H1 (cell line): ENCODE measurements at regions of chr2 and their contacts with region 1.

Region 1: DNA sequence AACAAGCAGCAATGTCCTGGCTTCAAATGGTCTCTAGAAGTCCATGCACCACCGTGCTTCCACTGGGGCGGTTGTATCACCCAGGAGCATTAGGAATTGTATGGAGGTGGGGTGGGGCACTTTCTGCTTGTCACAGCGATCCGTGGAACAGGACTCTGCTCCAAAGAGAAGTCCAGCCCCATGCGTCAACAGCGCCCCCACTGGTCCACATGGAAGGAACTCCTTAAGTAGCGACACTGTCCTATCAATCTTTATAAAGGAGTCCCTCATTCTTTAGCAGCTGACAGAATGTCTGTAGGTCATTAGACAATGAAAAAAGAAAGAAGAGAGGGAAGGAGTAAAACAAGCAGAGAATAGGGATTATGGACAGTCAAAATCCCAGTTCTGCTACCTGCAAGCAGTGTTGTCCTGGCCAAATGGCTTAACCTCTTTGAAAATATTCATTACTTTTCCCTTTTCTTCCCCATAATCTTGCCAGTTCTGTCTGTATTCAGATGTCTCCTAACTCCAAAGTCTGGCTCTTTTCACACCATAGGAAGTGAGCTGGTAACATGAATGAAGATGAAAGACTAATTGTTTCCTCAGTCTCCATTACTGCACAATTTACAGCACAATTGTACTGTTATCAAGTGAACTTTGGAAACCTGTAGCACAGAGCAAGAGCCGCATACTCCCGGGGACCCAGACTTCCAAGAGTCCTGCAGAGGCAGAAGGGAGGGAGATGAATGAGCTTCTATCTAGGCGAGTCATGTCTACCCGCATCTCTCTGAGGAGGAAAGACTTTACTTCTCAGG is 9.9 kb downstream of the NFE2L2 start:
- DNase-seq: peak; percentile 39 to 86
- H3K4me3 ChIP-seq: no peak overlapping the region
- H3K27ac ChIP-seq: no peak overlapping the region
- H3K4me1 ChIP-seq: peaks cover 0 to 7% (median 0%) of the 10 kb centered on the region in 4 experiments; a peak in 1 of 7 replicates
- H3K27me3 ChIP-seq: no peaks in the 10 kb centered on the region
- CTCF ChIP-seq: peak; percentile 66 to 92 (median 89)
- EP300 ChIP-seq: no peak
- POLR2A ChIP-seq: no peak
- RAD21 ChIP-seq: peak; percentile 52 to 73

Region 2: GRCh38 chr2:177229448-177230242 is 25.0 kb before region 1 on chr2:
- CTCF ChIA-PET with region 1: interaction called, 20 read pairs
- POLR2A ChIA-PET with region 1: interaction called, 10 read pairs
- DNase-seq: no peak
- H3K4me3 ChIP-seq: no peak overlapping the region
- H3K27ac ChIP-seq: no peak overlapping the region
- H3K4me1 ChIP-seq: no peaks in the 10 kb centered on the region
- H3K27me3 ChIP-seq: no peaks in the 10 kb centered on the region
- CTCF ChIP-seq: no peak
- EP300 ChIP-seq: no peak
- POLR2A ChIP-seq: no peak
- RAD21 ChIP-seq: no peak

Region 3: DNA sequence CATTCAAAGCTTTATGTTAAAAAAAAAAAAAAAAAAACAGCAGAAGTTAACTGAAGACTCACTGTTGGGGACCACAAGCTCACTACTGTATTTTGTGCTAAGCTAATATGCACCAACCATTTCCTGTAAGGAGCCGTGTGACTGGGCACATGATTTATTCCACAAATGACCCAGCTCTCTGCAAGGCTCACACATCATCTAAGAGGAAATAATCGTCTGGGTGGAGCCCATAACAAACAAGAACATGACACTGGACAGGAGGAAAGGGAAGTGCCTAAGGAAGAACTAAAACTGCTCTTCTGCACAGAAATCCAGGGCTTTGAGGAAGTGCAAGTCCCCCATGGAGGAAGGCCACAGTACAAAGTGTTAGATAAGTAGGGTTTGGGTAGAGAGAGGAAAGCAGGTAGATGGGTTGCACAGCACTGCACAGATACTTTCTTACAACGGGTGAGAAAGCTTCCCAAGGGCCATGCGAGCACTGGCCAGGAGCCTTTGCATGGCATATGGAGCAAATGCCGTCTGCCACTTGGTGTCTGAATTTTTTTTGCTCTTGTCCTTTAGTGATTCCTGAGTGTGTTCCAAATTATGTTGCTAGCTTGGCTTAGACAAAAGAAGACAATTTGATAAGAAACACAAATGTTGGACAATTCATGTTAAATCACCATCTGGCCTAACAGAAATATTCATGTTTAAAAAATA is 14.5 kb before region 1 on chr2:
- CTCF ChIA-PET with region 1: interaction called, 41 read pairs
- POLR2A ChIA-PET with region 1: interaction called, 7 read pairs
- DNase-seq: no peak
- H3K4me3 ChIP-seq: no peak overlapping the region
- H3K27ac ChIP-seq: no peak overlapping the region
- H3K4me1 ChIP-seq: peaks cover 0 to 2% (median 0%) of the 10 kb centered on the region in 4 experiments; a peak in 3 of 7 replicates
- H3K27me3 ChIP-seq: no peaks in the 10 kb centered on the region
- CTCF ChIP-seq: no peak
- EP300 ChIP-seq: no peak
- POLR2A ChIP-seq: no peak
- RAD21 ChIP-seq: no peak

Region 4: DNA sequence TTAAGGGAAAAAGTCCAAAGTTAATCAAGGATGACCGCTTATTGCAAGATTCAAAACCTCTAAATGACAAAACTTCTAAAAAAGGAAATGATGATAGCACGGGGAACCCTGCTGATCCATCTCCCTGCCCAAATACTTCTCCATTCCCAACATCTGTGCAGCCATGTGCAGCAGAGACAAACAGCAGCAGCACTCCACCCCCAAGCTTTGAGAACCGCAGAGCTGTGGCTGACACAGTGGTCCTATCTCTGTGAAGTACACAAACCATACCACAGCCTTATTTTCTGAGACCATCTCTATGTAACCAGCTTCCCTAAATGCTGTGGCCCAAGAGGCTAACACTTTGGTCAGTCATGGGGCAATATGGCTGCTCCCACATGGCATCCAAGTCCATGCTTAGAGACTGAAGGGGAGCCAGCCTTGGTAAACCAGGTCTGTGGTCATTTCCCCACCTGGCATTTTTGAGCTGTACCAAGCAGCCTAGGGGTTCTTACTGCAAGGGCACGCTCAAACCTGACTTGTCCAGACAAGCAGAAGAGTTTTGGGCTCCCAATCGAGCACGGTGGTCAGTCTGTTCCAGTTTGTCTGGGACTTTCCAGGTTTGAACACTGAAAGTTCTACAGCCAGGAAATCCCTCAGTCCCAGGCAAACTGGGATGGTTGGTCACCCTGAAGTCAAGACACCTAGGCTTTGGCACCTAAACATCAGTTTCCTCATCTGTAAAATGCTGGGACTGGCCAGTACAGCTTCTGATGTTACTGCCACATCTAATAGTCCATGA is 27.0 kb after region 1 on chr2:
- CTCF ChIA-PET with region 1: interaction called, 15 read pairs
- POLR2A ChIA-PET with region 1: no interaction called
- DNase-seq: no peak
- H3K4me3 ChIP-seq: no peak overlapping the region; a peak in 1 of 8 replicates
- H3K27ac ChIP-seq: no peak overlapping the region
- H3K4me1 ChIP-seq: no peaks in the 10 kb centered on the region
- H3K27me3 ChIP-seq: no peaks in the 10 kb centered on the region
- CTCF ChIP-seq: no peak
- EP300 ChIP-seq: no peak
- POLR2A ChIP-seq: no peak
- RAD21 ChIP-seq: no peak

Region 5: GRCh38 chr2:177296040-177296439 is 41.4 kb after region 1 on chr2:
- CTCF ChIA-PET with region 1: interaction called, 13 read pairs
- POLR2A ChIA-PET with region 1: no interaction called
- DNase-seq: no peak
- H3K4me3 ChIP-seq: no peak overlapping the region
- H3K27ac ChIP-seq: no peak overlapping the region
- H3K4me1 ChIP-seq: no peaks in the 10 kb centered on the region
- H3K27me3 ChIP-seq: no peaks in the 10 kb centered on the region
- CTCF ChIP-seq: no peak
- EP300 ChIP-seq: no peak
- POLR2A ChIP-seq: no peak
- RAD21 ChIP-seq: no peak